Activated CD8-positive, alpha-beta T cell treated with anti-CD3 and anti-CD28 coated beads, Interleukin-2, amount 10 ng/mL, durations not matched to agents 7 days and 5 days (primary cell): ENCODE measurements at regions of chr12 and their contacts with region 1.

Region 1: GRCh38 chr12:94101738-94102660 is 46.4 kb upstream of the PLXNC1 start:
- DNase-seq: peak; percentile 93
- ATAC-seq: peak; percentile 85
- H3K4me3 Mint-ChIP-seq: peak overlapping the region; percentile 79
- H3K27ac Mint-ChIP-seq: peak overlapping the region; percentile 84
- H3K4me1 Mint-ChIP-seq: peaks cover 39% of the 10 kb centered on the region
- H3K27me3 Mint-ChIP-seq: peaks cover 9% of the 10 kb centered on the region

Region 2: DNA sequence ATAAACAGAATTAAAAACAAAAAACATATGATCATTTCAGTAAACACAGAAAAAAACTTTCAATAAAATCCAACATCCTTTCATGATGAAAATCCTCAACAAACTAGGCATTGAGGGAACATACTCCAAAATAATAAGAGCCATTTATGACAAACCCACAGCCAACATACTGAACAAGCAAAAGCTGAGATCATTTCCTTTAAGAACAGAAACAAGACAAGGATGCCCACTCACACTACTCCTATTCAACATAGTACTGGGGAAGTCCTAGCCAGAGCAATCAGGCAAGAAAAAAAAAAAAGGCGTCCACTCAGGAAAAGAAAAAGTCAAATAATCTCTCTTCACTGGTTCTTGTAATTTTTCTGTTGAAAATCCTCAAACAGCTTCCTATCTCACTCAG is 604.5 kb before region 1 on chr12:
- CTCF ChIA-PET with region 1: interaction called, 239 read pairs
- POLR2A ChIA-PET with region 1: interaction called, 7 read pairs
- DNase-seq: no peak
- ATAC-seq: no peak
- H3K4me3 Mint-ChIP-seq: no peak overlapping the region
- H3K27ac Mint-ChIP-seq: no peak overlapping the region
- H3K4me1 Mint-ChIP-seq: peaks cover 9% of the 10 kb centered on the region
- H3K27me3 Mint-ChIP-seq: no peaks in the 10 kb centered on the region

Region 3: DNA sequence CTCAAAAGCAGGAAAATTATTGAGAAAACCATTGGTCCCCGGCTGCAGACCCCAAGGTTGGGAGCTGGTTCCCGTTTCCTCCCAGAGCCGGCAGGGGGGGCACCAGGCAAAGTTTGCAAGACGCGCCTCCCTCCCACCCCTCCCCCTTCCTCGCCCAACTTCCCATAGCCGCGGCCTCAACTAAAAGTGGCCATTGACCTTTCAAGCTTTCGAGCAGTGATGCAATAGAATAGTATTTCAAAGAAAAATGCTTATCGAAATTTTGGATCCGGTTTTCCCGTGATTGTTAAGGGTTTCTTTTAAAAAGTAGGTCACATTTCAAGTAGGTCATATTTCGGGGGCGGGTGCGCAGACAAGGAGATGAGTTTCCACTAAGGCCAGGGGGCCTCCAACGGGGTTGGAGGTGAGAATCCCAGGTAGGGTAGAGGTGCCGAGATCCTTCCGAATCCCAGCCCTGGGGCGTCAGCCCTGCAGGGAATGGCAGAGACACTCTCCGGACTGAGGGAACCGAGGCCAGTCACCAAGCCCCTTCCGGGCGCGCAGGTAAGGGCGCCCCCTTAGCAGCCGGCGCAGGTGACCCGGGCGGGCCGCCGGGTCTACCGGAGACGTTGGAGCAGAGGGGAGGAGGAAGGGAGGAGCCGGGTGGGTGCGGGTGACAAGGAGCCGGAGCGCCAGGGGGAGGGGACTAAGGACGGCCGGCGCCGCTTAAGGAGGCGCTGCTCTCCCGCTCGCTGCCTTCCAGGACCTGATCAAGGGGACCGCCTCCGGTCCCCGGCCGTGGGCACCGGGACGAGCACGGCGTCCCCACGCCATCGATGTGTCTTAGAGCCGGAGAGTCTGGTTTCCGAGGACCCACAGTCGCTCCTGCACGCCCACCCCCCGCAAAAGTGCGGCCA is 532.1 kb before region 1 on chr12:
- CTCF ChIA-PET with region 1: interaction called, 178 read pairs
- POLR2A ChIA-PET with region 1: interaction called, 8 read pairs
- DNase-seq: peak; percentile 87
- ATAC-seq: peak; percentile 62
- H3K4me3 Mint-ChIP-seq: peak overlapping the region; percentile 91
- H3K27ac Mint-ChIP-seq: peak overlapping the region; percentile 90
- H3K4me1 Mint-ChIP-seq: peaks cover 37% of the 10 kb centered on the region
- H3K27me3 Mint-ChIP-seq: peaks cover 7% of the 10 kb centered on the region

Region 4: DNA sequence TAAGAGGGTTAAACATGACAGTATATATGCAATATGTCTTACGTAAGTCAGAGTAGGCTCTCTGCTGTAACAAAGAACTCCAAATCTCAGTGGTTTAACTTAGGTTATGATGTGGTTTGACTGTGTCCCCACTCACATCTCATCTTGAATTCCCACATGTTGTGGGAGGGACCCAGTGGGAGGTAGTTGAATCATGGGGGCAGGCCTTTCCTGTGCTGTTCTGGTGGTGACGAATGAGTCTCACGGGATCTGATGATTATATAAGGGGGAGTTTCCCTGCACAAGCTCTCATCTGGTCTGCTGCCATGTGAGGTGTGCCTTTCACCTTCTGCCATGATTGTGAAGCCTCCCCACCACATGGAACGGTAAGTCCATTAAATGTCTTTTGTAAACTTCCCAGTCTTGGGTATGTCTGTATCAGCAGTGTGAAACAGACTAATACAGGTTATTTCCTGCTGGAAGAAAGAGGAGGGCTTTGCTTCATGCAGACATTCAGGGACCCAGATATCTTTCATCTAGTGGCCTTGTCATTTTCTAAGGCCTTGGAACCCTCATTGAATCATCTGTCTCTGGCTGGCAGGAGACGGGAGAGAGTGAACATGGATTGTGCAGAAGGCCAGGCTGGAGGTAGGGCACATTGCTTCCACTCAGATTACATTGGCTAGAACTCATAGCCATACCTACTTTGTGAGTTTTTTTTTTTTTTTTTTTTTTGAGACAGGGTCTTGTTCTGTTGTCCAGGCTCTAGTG is 328.7 kb before region 1 on chr12:
- CTCF ChIA-PET with region 1: interaction called, 259 read pairs
- POLR2A ChIA-PET with region 1: no interaction called
- DNase-seq: peak; percentile 28
- ATAC-seq: no peak
- H3K4me3 Mint-ChIP-seq: no peak overlapping the region
- H3K27ac Mint-ChIP-seq: no peak overlapping the region
- H3K4me1 Mint-ChIP-seq: peaks cover 27% of the 10 kb centered on the region
- H3K27me3 Mint-ChIP-seq: no peaks in the 10 kb centered on the region

Region 5: GRCh38 chr12:93991829-93992461 is 110.1 kb before region 1 on chr12:
- CTCF ChIA-PET with region 1: interaction called, 14 read pairs
- POLR2A ChIA-PET with region 1: no interaction called
- DNase-seq: no peak
- ATAC-seq: no peak
- H3K4me3 Mint-ChIP-seq: no peak overlapping the region
- H3K27ac Mint-ChIP-seq: no peak overlapping the region
- H3K4me1 Mint-ChIP-seq: no peaks in the 10 kb centered on the region
- H3K27me3 Mint-ChIP-seq: no peaks in the 10 kb centered on the region

Region 6: DNA sequence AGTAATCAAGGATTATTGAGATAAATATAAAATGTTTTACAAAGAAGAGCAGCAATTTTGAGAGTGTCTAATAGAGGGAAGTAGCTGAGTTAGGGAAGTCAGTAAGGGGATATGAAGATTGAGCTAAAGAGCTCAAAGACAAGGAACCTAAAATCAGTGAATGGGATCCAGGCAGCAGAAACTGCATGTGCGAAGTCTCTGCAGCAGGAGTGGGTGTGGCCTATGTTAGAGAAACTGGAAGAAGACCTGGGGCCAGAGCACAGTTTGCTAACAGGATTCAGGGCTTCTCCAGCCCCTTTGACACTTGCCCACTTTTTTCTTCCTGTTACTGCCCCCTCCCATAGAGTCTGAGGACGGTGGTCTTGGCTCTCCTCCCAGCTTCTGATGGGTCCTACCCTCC is 10.1 kb after region 1 on chr12:
- CTCF ChIA-PET with region 1: interaction called, 107 read pairs
- POLR2A ChIA-PET with region 1: interaction called, 3 read pairs
- DNase-seq: no peak
- ATAC-seq: no peak
- H3K4me3 Mint-ChIP-seq: no peak overlapping the region
- H3K27ac Mint-ChIP-seq: no peak overlapping the region
- H3K4me1 Mint-ChIP-seq: peaks cover 5% of the 10 kb centered on the region
- H3K27me3 Mint-ChIP-seq: no peaks in the 10 kb centered on the region

Region 7: GRCh38 chr12:94145191-94145983 is 43.4 kb after region 1 on chr12:
- CTCF ChIA-PET with region 1: no interaction called
- POLR2A ChIA-PET with region 1: no interaction called
- DNase-seq: no peak
- ATAC-seq: no peak
- H3K4me3 Mint-ChIP-seq: no peak overlapping the region
- H3K27ac Mint-ChIP-seq: no peak overlapping the region
- H3K4me1 Mint-ChIP-seq: peaks cover 25% of the 10 kb centered on the region
- H3K27me3 Mint-ChIP-seq: peaks cover 26% of the 10 kb centered on the region